T-cell (primary cell): ENCODE measurements at regions of chr5 and their contacts with region 1.

Region 1: DNA sequence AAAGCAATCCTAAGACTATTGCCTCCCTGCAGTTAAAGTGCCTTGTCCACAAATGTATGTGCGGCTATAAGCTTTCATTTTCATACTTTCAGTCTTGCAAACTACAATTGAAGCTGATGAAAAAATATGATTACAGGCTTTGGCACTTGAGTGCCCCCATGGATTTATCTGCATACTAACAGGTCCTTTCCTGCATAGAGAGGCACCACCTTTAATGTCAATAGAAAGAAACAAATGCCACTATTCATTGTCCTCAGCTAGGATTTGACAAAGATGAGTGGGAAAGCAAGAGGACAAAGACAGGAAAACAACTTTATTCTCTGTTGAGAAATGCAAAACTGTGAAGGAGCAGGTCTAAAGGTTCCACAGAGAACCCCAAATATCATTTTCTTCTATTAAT is 125.7 kb upstream of the PTGER4 start:
- DNase-seq: no peak
- ATAC-seq: no peak
- H3K4me3 ChIP-seq: no peak overlapping the region
- H3K4me3 Mint-ChIP-seq: no peak overlapping the region
- H3K27ac ChIP-seq: no peak overlapping the region
- H3K27ac Mint-ChIP-seq: no peak overlapping the region
- H3K4me1 ChIP-seq: no peaks in the 10 kb centered on the region
- H3K4me1 Mint-ChIP-seq: peaks cover 0 to 6% (median 4%) of the 10 kb centered on the region in 3 donors
- H3K27me3 ChIP-seq: no peaks in the 10 kb centered on the region
- H3K27me3 Mint-ChIP-seq: no peaks in the 10 kb centered on the region

Region 2: GRCh38 chr5:40410231-40410861 is 143.7 kb before region 1 on chr5:
- CTCF ChIA-PET with region 1: no interaction called
- POLR2A ChIA-PET with region 1: no interaction called
- DNase-seq: peak; percentile 35 to 95 (median 78)
- ATAC-seq: peak; percentile 86 to 91 (median 89)
- H3K4me3 ChIP-seq: peak overlapping the region; percentile 31 to 47
- H3K4me3 Mint-ChIP-seq: peak overlapping the region; percentile 66 to 80 (median 76)
- H3K27ac ChIP-seq: peak overlapping the region; percentile 97
- H3K27ac Mint-ChIP-seq: peak overlapping the region; percentile 98 to 100
- H3K4me1 ChIP-seq: peaks cover 49 to 53% of the 10 kb centered on the region in 2 experiments
- H3K4me1 Mint-ChIP-seq: peaks cover 64 to 67% (median 65%) of the 10 kb centered on the region in 3 donors
- H3K27me3 ChIP-seq: no peaks in the 10 kb centered on the region
- H3K27me3 Mint-ChIP-seq: no peaks in the 10 kb centered on the region

Region 3: DNA sequence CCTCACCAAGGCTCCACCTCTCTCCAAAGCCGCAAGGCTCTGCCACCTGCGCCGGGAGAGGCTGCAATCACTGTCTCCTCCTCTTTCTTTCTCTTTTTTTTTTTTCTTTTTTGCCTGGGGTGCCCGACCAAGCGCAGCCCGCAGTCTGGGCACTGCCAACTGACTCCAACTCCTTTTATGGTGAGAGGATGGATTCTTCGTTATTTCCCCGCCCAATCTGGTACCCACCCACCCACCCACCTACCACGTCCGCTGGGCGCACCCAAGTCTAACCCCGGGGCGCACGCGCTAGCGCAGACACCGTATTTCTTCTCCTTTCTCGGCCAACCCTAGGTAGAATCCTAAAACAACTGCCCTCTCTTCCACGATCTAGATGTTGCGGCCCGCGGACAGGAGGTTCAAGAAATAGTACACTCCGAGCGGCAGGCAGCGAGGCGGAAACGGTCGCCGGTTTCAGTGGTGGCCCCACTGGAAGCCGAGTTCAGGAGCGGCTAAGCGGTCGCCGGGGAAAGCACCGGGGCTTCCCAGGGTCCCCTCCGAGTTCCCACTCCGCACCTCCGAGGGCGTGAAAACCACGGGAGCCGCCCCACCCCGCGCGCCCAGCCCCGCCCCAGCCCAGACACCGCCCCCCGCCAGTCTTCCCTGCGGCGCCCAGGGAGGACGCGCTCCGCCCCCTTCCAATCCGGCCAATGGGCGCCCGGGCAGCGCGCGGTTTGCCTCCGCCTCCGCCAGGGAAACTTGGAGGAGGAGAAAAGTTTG is 125.3 kb after region 1 on chr5:
- CTCF ChIA-PET with region 1: no interaction called
- POLR2A ChIA-PET with region 1: interaction called, 3 to 20 read pairs
- DNase-seq: peak; percentile 78 to 94 (median 85)
- ATAC-seq: peak; percentile 75 to 78 (median 76)
- H3K4me3 ChIP-seq: peak overlapping the region; percentile 90 to 95
- H3K4me3 Mint-ChIP-seq: peak overlapping the region; percentile 92 to 100 (median 99)
- H3K27ac ChIP-seq: peak overlapping the region; percentile 96
- H3K27ac Mint-ChIP-seq: peak overlapping the region; percentile 95 to 99
- H3K4me1 ChIP-seq: peaks cover 30 to 46% of the 10 kb centered on the region in 2 experiments
- H3K4me1 Mint-ChIP-seq: peaks cover 53 to 82% (median 62%) of the 10 kb centered on the region in 3 donors
- H3K27me3 ChIP-seq: no peaks in the 10 kb centered on the region
- H3K27me3 Mint-ChIP-seq: no peaks in the 10 kb centered on the region